Right cardiac atrium (tissue), 5 donors: ENCODE measurements at regions of chr20 and their contacts with region 1.

Region 1: GRCh38 chr20:9609887-9610502 is 95.6 kb downstream of the LAMP5 start:
- DNase-seq: peak in 2 of 3 donors; percentile 18 to 22
- ATAC-seq: no peak
- H3K4me3 ChIP-seq: no peak overlapping the region
- H3K27ac ChIP-seq: no peak overlapping the region
- H3K4me1 ChIP-seq: no peaks in the 10 kb centered on the region
- H3K27me3 ChIP-seq: no peaks in the 10 kb centered on the region

Region 2: DNA sequence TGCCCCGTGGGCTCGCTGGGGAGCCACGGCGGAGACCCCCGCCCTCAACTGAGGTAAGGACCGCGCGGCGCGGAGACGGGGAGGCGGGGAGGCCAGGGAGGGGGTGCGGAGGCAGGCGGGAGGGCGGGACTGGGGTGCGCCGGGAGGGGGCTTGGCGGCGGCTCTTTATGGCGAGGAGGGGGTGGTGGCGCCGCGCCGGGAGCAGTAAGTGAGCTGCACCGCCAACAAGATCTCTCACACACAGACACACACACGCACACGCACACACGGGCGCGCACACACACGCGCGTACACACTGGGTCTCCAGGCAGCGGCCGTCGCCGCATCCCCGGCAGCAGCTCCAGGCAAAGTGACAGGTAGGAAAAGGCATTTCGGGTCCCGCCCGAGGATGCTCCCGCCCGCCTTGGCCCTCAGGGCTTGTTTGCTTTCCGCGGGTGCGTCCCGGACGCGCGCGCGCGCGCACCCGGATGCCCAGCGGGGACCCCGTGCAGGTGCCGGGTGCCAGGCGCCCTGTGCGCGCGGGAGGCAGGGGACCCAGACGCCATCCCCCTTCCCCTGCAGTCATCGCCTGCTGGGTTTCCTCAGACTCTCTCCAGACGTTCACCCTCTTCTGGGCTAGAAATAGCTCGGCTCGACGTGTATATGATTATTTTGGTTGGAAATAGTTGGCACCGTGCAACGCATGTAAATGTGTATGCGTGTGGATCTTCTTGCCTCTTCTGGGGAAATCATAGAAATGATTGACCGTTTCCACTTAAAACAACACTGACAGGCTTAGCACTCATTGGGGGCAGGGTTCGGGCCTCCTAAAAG is 540.9 kb before region 1 on chr20 and contains the start of gene PLCB4:
- intact Hi-C with region 1: no loop called
- DNase-seq: peak; percentile 46 to 80 (median 80)
- ATAC-seq: peak; percentile 33 to 52
- H3K4me3 ChIP-seq: peak within 1 kb of the TSS; percentile 92
- H3K27ac ChIP-seq: peak within 1 kb of the TSS; percentile 76
- H3K4me1 ChIP-seq: peaks cover 5% of the 10 kb centered on the region
- H3K27me3 ChIP-seq: no peaks in the 10 kb centered on the region
- total RNA-seq, gene PLCB4: 22.8 to 42.2 (median 28.3) TPM

Region 3: GRCh38 chr20:9407805-9408421 is 202.1 kb before region 1 on chr20:
- intact Hi-C with region 1: loop called (anchors 2 to 5 kb)
- DNase-seq: no peak
- ATAC-seq: peak; percentile 71 to 80
- H3K4me3 ChIP-seq: no peak overlapping the region
- H3K27ac ChIP-seq: no peak overlapping the region
- H3K4me1 ChIP-seq: no peaks in the 10 kb centered on the region
- H3K27me3 ChIP-seq: no peaks in the 10 kb centered on the region

Region 4: GRCh38 chr20:9689041-9689440 is 79.0 kb after region 1 on chr20:
- intact Hi-C with region 1: no loop called
- DNase-seq: no peak
- ATAC-seq: no peak
- H3K4me3 ChIP-seq: no peak overlapping the region
- H3K27ac ChIP-seq: no peak overlapping the region
- H3K4me1 ChIP-seq: no peaks in the 10 kb centered on the region
- H3K27me3 ChIP-seq: no peaks in the 10 kb centered on the region